Activated CD8-positive, alpha-beta T cell treated with anti-CD3 and anti-CD28 coated beads, Interleukin-2, amount 10 ng/mL, durations not matched to agents 7 days and 5 days (primary cell): ENCODE measurements at regions of chr10 and their contacts with region 1.

Region 1: GRCh38 chr10:118459726-118460193 is 117.6 kb upstream of the FAM204A start:
- DNase-seq: peak; percentile 72
- ATAC-seq: peak; percentile 87
- H3K4me3 Mint-ChIP-seq: peak overlapping the region; percentile 9
- H3K27ac Mint-ChIP-seq: no peak overlapping the region
- H3K4me1 Mint-ChIP-seq: peaks cover 6% of the 10 kb centered on the region
- H3K27me3 Mint-ChIP-seq: peaks cover 38% of the 10 kb centered on the region

Region 2: DNA sequence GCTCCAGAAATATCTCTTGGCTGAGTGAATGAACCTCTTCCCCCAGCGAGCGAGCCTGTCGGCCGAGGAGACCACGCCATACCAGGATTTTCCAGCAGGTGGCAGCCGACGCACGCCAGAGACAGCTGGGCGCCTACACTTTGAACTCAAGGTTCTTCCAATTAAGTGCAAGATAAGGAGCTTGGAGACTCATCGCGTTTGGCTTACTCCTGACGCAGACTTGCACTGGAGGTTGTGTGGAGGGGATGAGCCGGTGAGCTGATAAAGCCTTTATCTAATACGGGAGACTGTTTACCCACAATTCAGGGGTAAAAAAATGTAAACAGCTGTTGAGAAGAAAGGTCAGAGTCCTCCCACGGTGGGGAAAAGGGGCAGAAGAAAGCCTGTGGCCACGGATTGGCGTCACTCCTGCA is 963.1 kb before region 1 on chr10:
- CTCF ChIA-PET with region 1: interaction called, 14 read pairs
- POLR2A ChIA-PET with region 1: no interaction called
- DNase-seq: peak; percentile 72
- ATAC-seq: peak; percentile 64
- H3K4me3 Mint-ChIP-seq: no peak overlapping the region
- H3K27ac Mint-ChIP-seq: no peak overlapping the region
- H3K4me1 Mint-ChIP-seq: no peaks in the 10 kb centered on the region
- H3K27me3 Mint-ChIP-seq: peaks cover 20% of the 10 kb centered on the region

Region 3: GRCh38 chr10:118266098-118266737 is 193.5 kb before region 1 on chr10:
- CTCF ChIA-PET with region 1: no interaction called
- POLR2A ChIA-PET with region 1: no interaction called
- DNase-seq: no peak
- ATAC-seq: no peak
- H3K4me3 Mint-ChIP-seq: no peak overlapping the region
- H3K27ac Mint-ChIP-seq: no peak overlapping the region
- H3K4me1 Mint-ChIP-seq: no peaks in the 10 kb centered on the region
- H3K27me3 Mint-ChIP-seq: peaks cover 51% of the 10 kb centered on the region

Region 4: GRCh38 chr10:118447478-118448270 is 12.1 kb before region 1 on chr10:
- CTCF ChIA-PET with region 1: interaction called, 22 read pairs
- POLR2A ChIA-PET with region 1: no interaction called
- DNase-seq: no peak
- ATAC-seq: no peak
- H3K4me3 Mint-ChIP-seq: no peak overlapping the region
- H3K27ac Mint-ChIP-seq: no peak overlapping the region
- H3K4me1 Mint-ChIP-seq: no peaks in the 10 kb centered on the region
- H3K27me3 Mint-ChIP-seq: peaks cover 32% of the 10 kb centered on the region

Region 5: GRCh38 chr10:118471863-118472262 is 12.1 kb after region 1 on chr10:
- CTCF ChIA-PET with region 1: interaction called, 18 read pairs
- POLR2A ChIA-PET with region 1: no interaction called
- DNase-seq: no peak
- ATAC-seq: no peak
- H3K4me3 Mint-ChIP-seq: no peak overlapping the region
- H3K27ac Mint-ChIP-seq: no peak overlapping the region
- H3K4me1 Mint-ChIP-seq: no peaks in the 10 kb centered on the region
- H3K27me3 Mint-ChIP-seq: peaks cover 28% of the 10 kb centered on the region

Region 6: GRCh38 chr10:118543714-118544400 is 84.1 kb after region 1 on chr10:
- CTCF ChIA-PET with region 1: interaction called, 23 read pairs
- POLR2A ChIA-PET with region 1: no interaction called
- DNase-seq: peak; percentile 79
- ATAC-seq: peak; percentile 96
- H3K4me3 Mint-ChIP-seq: no peak overlapping the region
- H3K27ac Mint-ChIP-seq: no peak overlapping the region
- H3K4me1 Mint-ChIP-seq: peaks cover 5% of the 10 kb centered on the region
- H3K27me3 Mint-ChIP-seq: peaks cover 37% of the 10 kb centered on the region